ENCODE measurements at regions of chr17 and their contacts with region 1.

Region 1: DNA sequence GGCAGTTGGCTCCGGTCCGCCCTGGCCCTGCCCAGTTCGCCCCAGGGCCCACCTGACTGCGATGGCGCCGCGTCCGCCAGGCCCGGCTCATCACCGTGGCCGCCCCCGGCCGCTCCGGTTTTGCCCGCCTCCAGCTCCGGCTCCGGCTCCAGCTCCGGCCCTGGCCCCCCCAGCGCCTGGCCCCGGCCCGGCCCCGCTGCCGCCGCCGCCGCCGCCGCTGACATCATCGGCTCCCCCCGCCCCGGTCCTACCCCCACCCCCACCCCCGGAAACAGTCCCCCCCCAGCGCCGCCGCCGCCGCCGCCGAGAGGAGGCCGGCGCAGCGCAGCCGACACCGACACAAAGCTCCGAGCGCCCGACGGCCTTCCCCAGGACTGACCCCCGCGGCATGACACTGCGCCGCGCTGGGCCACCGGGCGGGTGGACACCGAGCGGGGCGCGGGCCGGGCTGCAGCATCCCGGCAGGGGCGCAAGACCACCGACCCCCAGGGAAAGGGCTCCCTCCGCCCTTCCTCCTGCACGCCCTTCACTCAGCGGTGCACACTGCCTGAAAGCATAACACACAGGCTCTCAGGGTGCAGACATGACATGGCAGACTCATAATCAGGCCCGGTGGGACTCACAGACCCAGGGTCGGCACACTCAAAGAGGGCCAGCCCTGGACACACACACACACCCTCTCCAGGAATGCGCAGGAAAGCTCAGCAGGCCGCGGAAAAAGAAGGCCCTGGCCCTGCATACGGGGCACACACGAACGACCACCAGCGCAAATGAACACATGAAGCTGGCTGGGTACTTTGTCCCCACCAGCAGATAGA is at the start of gene ZBTB4:
- DNase-seq: peak in 40 of 42 donors; percentile 33 to 85 (median 70)

Region 2: GRCh38 chr17:7214300-7215135 is 265.1 kb before region 1 on chr17:
- intact Hi-C with region 1: no loop called
- DNase-seq: peak; percentile 88 to 98 (median 96)

Region 3: GRCh38 chr17:7435221-7435675 is 44.4 kb before region 1 on chr17 and contains the start of gene TMEM102:
- intact Hi-C with region 1: loop called (anchors 5 kb)
- DNase-seq: peak; percentile 85 to 97 (median 94)

Measured in head of caudate nucleus (tissue), 42 donors.